ENCODE measurements at regions of chr11 and their contacts with region 1.

Region 1: DNA sequence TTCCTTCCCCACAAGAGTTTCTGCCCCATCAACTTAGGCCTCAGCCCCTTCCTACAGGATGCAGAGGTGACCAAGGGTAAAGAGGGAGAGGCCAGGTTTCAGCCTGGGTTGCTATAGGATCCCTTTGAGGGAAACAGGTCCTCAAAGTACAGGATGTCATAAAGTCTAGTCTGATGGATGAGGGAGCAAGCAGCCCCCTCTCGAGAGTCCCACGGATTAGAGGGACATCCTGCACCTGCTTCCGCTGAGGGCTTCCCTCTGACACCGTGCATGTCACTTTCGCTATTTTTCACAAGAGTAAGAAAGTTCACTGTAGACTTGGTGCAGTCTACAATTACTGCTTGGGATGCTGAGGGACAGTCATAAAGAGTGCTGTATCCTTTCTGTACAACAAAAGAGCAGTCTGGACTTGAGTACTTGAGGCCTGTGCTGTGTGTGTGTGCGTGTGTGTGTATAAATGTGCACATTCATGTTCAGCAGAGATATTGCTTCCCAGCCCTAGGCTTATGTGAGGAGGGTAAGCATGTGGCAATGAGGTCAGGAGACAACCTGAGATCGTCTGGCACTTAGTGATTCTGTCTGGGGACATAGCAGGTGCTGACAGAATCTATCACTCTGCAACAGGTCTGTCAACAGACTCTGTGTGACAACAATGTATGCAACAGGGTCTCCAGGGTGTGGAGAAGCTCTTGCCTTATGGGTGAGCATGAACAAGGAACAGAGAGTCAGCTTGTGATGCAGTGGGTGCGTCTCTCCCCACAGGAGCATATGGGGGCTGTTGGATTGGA is 18.0 kb upstream of the CHST1 start:
- DNase-seq: no peak
- H3K4me3 ChIP-seq: no peak overlapping the region
- H3K27ac ChIP-seq: no peak overlapping the region
- H3K4me1 ChIP-seq: no peaks in the 10 kb centered on the region
- H3K27me3 ChIP-seq: no peaks in the 10 kb centered on the region
- CTCF ChIP-seq: no peak

Region 2: GRCh38 chr11:45624095-45624494 is 59.4 kb before region 1 on chr11:
- CTCF ChIA-PET with region 1: no interaction called
- dilution Hi-C with region 1: no loop called
- in situ Hi-C with region 1: no loop called
- intact Hi-C with region 1: no loop called
- DNase-seq: no peak
- H3K4me3 ChIP-seq: no peak overlapping the region
- H3K27ac ChIP-seq: no peak overlapping the region
- H3K4me1 ChIP-seq: no peaks in the 10 kb centered on the region
- H3K27me3 ChIP-seq: no peaks in the 10 kb centered on the region
- CTCF ChIP-seq: no peak

Region 3: DNA sequence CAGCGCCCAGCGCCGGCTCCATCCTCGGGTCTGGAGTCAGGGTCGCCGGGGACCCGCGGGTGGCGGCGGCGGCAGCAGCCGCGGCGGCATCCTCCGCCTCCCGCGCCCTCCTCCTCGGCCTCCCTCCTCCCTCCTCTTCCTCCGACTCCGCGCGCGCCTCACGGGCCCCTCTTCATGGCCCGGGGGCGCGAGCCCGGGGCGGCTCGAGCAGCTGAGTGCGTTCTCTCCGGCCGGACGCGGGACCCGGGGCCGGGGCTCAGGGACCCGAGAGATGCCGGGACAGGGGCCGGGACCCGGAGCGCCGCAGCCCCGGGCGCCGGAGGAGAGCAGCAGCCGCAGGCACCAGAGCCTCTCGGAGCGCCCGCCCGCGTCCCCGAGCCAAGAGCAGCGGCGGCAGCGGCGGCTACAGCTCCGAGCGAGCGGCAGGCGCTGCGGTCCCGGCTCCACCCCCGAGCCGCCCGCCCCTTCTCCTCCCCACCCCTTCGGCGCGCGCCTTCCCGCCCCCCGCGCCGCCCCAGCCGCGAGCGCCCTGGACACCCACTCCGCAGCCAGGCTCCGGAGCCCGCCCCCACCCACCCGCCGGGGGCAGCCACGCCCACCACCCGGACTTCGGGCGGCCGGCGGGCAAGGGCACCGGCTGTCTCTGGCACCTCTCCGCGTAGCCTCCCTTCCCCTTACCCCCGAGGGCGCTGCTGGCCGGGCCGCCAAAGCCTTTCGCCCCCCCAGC is 18.1 kb before region 1 on chr11 and contains the start of gene CHST1:
- CTCF ChIA-PET with region 1: no interaction called
- dilution Hi-C with region 1: no loop called
- in situ Hi-C with region 1: no loop called
- intact Hi-C with region 1: no loop called
- DNase-seq: peak; percentile 11
- H3K4me3 ChIP-seq: peak within 1 kb of the TSS; percentile 34 to 50 (median 37)
- H3K27ac ChIP-seq: no peak within 1 kb of the TSS
- H3K4me1 ChIP-seq: peaks cover 13% of the 10 kb centered on the region
- H3K27me3 ChIP-seq: peaks cover 13% of the 10 kb centered on the region
- CTCF ChIP-seq: no peak
- total RNA-seq, gene CHST1: 0.33 to 1.2 TPM

Region 4: GRCh38 chr11:45715418-45715817 is 32.0 kb after region 1 on chr11:
- CTCF ChIA-PET with region 1: no interaction called
- dilution Hi-C with region 1: loop called (anchors 5 kb)
- in situ Hi-C with region 1: no loop called
- intact Hi-C with region 1: no loop called
- DNase-seq: no peak
- H3K4me3 ChIP-seq: no peak overlapping the region
- H3K27ac ChIP-seq: no peak overlapping the region
- H3K4me1 ChIP-seq: no peaks in the 10 kb centered on the region
- H3K27me3 ChIP-seq: peaks cover 3% of the 10 kb centered on the region
- CTCF ChIP-seq: no peak

Region 5: GRCh38 chr11:45765836-45766235 is 82.4 kb after region 1 on chr11:
- CTCF ChIA-PET with region 1: no interaction called
- dilution Hi-C with region 1: loop called (anchors 5 kb)
- in situ Hi-C with region 1: no loop called
- intact Hi-C with region 1: no loop called
- DNase-seq: no peak
- H3K4me3 ChIP-seq: no peak overlapping the region
- H3K27ac ChIP-seq: no peak overlapping the region
- H3K4me1 ChIP-seq: no peaks in the 10 kb centered on the region
- H3K27me3 ChIP-seq: peaks cover 2% of the 10 kb centered on the region
- CTCF ChIP-seq: no peak

Region 6: GRCh38 chr11:45885274-45885920 is 201.9 kb after region 1 on chr11 and contains the start of gene MAPK8IP1:
- CTCF ChIA-PET with region 1: no interaction called
- dilution Hi-C with region 1: no loop called
- in situ Hi-C with region 1: no loop called
- intact Hi-C with region 1: no loop called
- DNase-seq: peak; percentile 28
- H3K4me3 ChIP-seq: peak within 1 kb of the TSS; percentile 27 to 45 (median 44)
- H3K27ac ChIP-seq: no peak within 1 kb of the TSS
- H3K4me1 ChIP-seq: peaks cover 2% of the 10 kb centered on the region
- H3K27me3 ChIP-seq: no peaks in the 10 kb centered on the region
- CTCF ChIP-seq: no peak
- total RNA-seq, gene MAPK8IP1: 6.7 to 11.0 TPM